Mucosa of descending colon (tissue), 3 donors: ENCODE measurements at regions of chr3 and their contacts with region 1.

Region 1: GRCh38 chr3:41199866-41200668 is 762 bp downstream of the CTNNB1 start:
- DNase-seq: peak in 1 of 3 donors; percentile 42
- ATAC-seq: peak; percentile 13
- H3K4me3 ChIP-seq: peak overlapping the region; percentile 81
- H3K4me1 ChIP-seq: peaks cover 34% of the 10 kb centered on the region
- CTCF ChIP-seq: no peak

Region 2: GRCh38 chr3:40584625-40585189 is 615.4 kb before region 1 on chr3:
- intact Hi-C with region 1: loop called in 1 of 2 experiments (anchors 10 kb)
- DNase-seq: peak; percentile 82 to 93 (median 90)
- ATAC-seq: peak; percentile 94
- H3K4me3 ChIP-seq: no peak overlapping the region
- H3K4me1 ChIP-seq: no peaks in the 10 kb centered on the region
- CTCF ChIP-seq: peak; percentile 88